ENCODE measurements at regions of chr6 and their contacts with region 1.

Region 1: GRCh38 chr6:111997078-111997852 is 56.6 kb upstream of the CCN6 start:
- DNase-seq: peak; percentile 48
- H3K4me3 ChIP-seq: no peak overlapping the region
- H3K27ac ChIP-seq: no peak overlapping the region
- H3K27me3 ChIP-seq: no peaks in the 10 kb centered on the region
- CTCF ChIP-seq: peak; percentile 94

Region 2: DNA sequence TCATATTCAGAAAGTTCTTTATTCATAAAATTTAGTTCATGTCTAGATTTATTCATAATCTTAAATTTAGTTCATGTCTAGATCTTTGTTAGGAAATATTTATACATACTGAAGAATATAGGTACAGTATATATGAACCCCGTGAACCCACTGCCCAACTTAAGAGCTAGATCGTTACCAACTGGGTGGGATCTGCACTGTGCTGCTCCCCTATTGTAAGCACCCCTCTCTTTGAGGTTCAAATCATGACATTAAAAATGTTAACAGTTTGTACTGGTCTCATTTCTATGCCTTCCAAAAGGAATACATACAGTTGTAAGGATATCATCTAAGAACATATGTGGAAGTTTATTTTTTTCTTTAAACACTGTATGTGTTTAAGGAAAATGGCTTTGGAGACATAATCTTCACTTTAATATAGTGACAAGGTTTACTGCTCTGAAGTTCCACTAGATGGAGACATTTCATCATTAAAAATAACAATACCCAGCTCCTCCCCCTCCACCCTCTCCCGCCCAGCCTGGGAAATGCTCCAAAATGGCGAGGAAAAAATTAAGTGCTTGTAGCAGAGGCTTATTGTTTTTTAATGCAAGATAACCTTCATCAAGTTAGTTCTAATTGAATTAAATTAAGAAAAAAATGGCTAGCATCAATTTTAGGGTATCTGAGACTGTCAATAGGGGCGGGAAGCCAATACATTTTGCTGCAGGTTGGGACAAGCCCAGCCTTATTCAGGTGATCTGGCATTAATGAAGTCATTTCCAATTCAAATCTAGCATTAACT is 287.5 kb before region 1 on chr6:
- CTCF ChIA-PET with region 1: interaction called, 26 read pairs
- POLR2A ChIA-PET with region 1: no interaction called
- DNase-seq: no peak
- H3K4me3 ChIP-seq: no peak overlapping the region
- H3K27ac ChIP-seq: no peak overlapping the region
- H3K27me3 ChIP-seq: no peaks in the 10 kb centered on the region
- CTCF ChIP-seq: peak; percentile 62

Measured in AG04450 (cell line).